Activated B cell treated with CpG ODN at 0.5 μM for 24 hours (primary cell): ENCODE measurements at regions of chr4 and their contacts with region 1.

Region 1: GRCh38 chr4:2787230-2788088 is 5.4 kb upstream of the SH3BP2 start:
- DNase-seq: peak; percentile 56
- ATAC-seq: peak; percentile 50
- H3K4me3 Mint-ChIP-seq: peak overlapping the region; percentile 41
- H3K27ac Mint-ChIP-seq: peak overlapping the region; percentile 93
- H3K4me1 Mint-ChIP-seq: peaks cover 72% of the 10 kb centered on the region
- H3K27me3 Mint-ChIP-seq: no peaks in the 10 kb centered on the region
- CTCF ChIP-seq: no peak

Region 2: GRCh38 chr4:2484993-2485392 is 302.5 kb before region 1 on chr4:
- CTCF ChIA-PET with region 1: no interaction called
- POLR2A ChIA-PET with region 1: interaction called, 12 read pairs
- intact Hi-C with region 1: no loop called
- DNase-seq: peak; percentile 64
- ATAC-seq: peak; percentile 86
- H3K4me3 Mint-ChIP-seq: peak overlapping the region; percentile 75
- H3K27ac Mint-ChIP-seq: peak overlapping the region; percentile 92
- H3K4me1 Mint-ChIP-seq: peaks cover 93% of the 10 kb centered on the region
- H3K27me3 Mint-ChIP-seq: no peaks in the 10 kb centered on the region
- CTCF ChIP-seq: no peak

Region 3: DNA sequence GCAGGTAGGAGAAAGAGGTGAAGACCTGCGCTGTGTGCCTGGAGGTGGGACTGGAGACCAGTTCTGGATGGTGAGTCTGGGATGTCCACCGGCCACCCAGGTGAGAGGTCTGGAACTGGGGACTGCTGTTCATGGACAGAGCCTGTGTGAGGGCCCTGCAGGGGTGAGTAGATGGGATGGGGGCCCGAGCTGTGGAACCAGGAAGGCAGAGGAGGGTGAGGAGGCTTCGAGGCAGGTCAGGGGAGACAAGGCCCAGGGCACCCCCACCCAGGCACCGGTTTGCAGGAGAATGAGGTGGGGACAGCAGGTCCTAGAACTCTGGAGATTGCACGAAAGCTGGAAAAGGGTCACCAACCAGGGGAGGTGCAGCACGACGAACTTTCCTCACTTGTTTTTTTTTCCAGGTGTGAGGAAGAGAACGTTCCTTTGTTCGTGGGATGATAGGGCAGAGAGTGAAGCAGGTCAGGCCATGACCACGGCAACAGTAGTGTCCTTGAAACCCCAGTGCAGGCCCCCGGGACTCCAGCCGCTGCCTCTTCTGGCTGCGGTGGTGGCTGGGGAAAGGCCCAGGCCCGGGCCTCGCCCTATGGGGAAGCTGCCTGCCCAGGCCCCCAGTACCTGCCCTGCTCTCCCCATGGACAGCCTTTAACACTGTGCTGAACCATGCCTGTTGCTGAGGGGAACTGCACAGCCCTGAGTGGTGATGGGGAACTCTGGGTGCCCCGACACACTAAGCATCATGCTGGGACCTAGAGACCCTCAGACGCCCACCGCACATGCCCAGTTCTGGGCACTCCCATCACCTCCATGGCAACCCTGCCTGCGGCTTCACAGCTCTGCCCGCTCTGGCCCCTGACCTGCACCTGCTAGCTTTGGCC is 54.2 kb before region 1 on chr4:
- CTCF ChIA-PET with region 1: no interaction called
- POLR2A ChIA-PET with region 1: no interaction called
- intact Hi-C with region 1: no loop called
- DNase-seq: no peak
- ATAC-seq: no peak
- H3K4me3 Mint-ChIP-seq: no peak overlapping the region
- H3K27ac Mint-ChIP-seq: no peak overlapping the region
- H3K4me1 Mint-ChIP-seq: peaks cover 11% of the 10 kb centered on the region
- H3K27me3 Mint-ChIP-seq: no peaks in the 10 kb centered on the region
- CTCF ChIP-seq: no peak

Region 4: GRCh38 chr4:2800691-2801596 is 13.5 kb after region 1 on chr4:
- CTCF ChIA-PET with region 1: no interaction called
- POLR2A ChIA-PET with region 1: interaction called, 80 read pairs
- intact Hi-C with region 1: loop called (anchors 1 kb)
- DNase-seq: peak; percentile 60
- ATAC-seq: peak; percentile 79
- H3K4me3 Mint-ChIP-seq: peak overlapping the region; percentile 68
- H3K27ac Mint-ChIP-seq: peak overlapping the region; percentile 75
- H3K4me1 Mint-ChIP-seq: peaks cover 84% of the 10 kb centered on the region
- H3K27me3 Mint-ChIP-seq: no peaks in the 10 kb centered on the region
- CTCF ChIP-seq: no peak

Region 5: GRCh38 chr4:2811830-2812611 is 24.6 kb after region 1 on chr4:
- CTCF ChIA-PET with region 1: interaction called, 5 read pairs
- POLR2A ChIA-PET with region 1: interaction called, 47 read pairs
- intact Hi-C with region 1: loop called (anchors 1 kb)
- DNase-seq: peak; percentile 65
- ATAC-seq: peak; percentile 80
- H3K4me3 Mint-ChIP-seq: peak overlapping the region; percentile 85
- H3K27ac Mint-ChIP-seq: peak overlapping the region; percentile 96
- H3K4me1 Mint-ChIP-seq: peaks cover 89% of the 10 kb centered on the region
- H3K27me3 Mint-ChIP-seq: no peaks in the 10 kb centered on the region
- CTCF ChIP-seq: no peak

Region 6: GRCh38 chr4:2832349-2833239 is 45.1 kb after region 1 on chr4:
- CTCF ChIA-PET with region 1: no interaction called
- POLR2A ChIA-PET with region 1: interaction called, 21 read pairs
- intact Hi-C with region 1: loop called (anchors 1 kb)
- DNase-seq: peak; percentile 65
- ATAC-seq: peak; percentile 85
- H3K4me3 Mint-ChIP-seq: peak overlapping the region; percentile 67
- H3K27ac Mint-ChIP-seq: peak overlapping the region; percentile 83
- H3K4me1 Mint-ChIP-seq: peaks cover 60% of the 10 kb centered on the region
- H3K27me3 Mint-ChIP-seq: no peaks in the 10 kb centered on the region
- CTCF ChIP-seq: no peak

Region 7: GRCh38 chr4:2843263-2843940 is 55.9 kb after region 1 on chr4 and contains the start of gene ADD1:
- CTCF ChIA-PET with region 1: no interaction called
- POLR2A ChIA-PET with region 1: interaction called, 12 read pairs
- intact Hi-C with region 1: no loop called
- DNase-seq: peak; percentile 100
- ATAC-seq: peak; percentile 87
- H3K4me3 Mint-ChIP-seq: peak within 1 kb of the TSS; percentile 96
- H3K27ac Mint-ChIP-seq: peak within 1 kb of the TSS; percentile 94
- H3K4me1 Mint-ChIP-seq: peaks cover 61% of the 10 kb centered on the region
- H3K27me3 Mint-ChIP-seq: no peaks in the 10 kb centered on the region
- CTCF ChIP-seq: no peak
- total RNA-seq, gene ADD1: 326 and 340 TPM in 2 replicates

Region 8: DNA sequence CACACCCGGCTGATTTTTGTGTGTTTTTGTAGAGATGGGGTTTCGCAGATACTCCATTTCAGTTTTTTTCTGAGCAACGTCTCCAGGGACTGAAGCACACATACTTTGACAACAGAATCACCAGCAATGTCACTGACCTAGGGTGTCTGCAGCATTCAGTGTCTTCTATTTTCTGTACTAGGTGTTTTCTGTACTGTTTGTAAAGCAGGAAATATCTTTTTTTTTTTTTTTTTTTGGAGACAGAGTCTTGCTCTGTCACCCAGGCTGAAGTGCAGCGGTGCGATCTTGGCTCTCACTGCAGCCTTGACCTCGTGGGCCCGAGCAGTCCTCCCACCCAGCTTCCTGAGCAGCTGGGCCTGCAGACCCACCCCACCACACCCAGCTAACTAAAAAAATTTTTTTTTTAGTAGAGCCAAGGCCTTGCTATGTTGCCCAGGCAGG is 65.0 kb after region 1 on chr4:
- CTCF ChIA-PET with region 1: no interaction called
- POLR2A ChIA-PET with region 1: interaction called, 12 read pairs
- intact Hi-C with region 1: loop called (anchors 2 kb)
- DNase-seq: no peak
- ATAC-seq: peak; percentile 77
- H3K4me3 Mint-ChIP-seq: peak overlapping the region; percentile 73
- H3K27ac Mint-ChIP-seq: peak overlapping the region; percentile 82
- H3K4me1 Mint-ChIP-seq: peaks cover 91% of the 10 kb centered on the region
- H3K27me3 Mint-ChIP-seq: no peaks in the 10 kb centered on the region
- CTCF ChIP-seq: no peak